IMR-90 (cell line): ENCODE measurements at regions of chr15 and their contacts with region 1.

Region 1: DNA sequence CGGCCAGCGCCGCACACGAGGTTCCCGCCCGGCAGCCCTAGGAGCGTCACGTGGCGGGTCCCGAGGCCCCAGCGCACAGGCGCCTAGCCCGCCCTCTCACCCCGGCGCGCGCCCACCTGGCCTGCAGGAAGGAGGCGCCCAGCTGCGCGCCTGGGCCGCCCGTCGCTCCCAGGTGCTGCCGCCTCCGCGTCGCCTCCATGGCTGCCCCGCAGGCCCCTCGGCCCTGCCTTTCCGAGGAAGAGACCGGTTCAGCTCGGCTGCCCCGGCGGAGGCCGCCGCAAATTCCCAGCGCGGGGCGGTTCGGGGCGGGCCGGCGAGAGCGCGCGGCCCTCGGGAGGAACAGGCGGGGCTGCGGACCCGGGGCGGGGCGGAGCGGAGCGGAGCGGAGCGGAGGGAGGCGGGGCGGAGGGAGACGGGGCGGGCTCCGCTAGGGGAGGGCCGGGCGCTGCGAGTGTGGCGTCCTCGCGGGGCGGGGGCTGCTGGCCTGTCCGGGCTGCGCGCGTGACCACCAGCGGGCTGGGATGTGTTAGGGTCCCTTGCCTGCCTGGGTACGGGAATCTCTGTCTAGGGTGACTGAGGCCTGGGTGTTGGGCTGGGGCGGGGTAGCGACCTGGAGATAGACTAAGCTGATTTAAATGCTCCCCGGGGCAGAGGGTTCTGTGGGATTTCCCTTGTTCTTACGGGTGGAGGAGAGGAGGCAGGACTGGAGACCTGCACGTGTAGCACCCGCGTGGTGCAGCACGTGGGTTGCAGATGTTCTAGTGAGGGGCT is at the start of gene CLN6:
- DNase-seq: peak; percentile 77
- ATAC-seq: peak; percentile 93
- H3K4me3 ChIP-seq: peak within 1 kb of the TSS; percentile 94
- H3K27ac ChIP-seq: peak within 1 kb of the TSS; percentile 77
- H3K4me1 ChIP-seq: peaks cover 8% of the 10 kb centered on the region
- H3K27me3 ChIP-seq: no peaks in the 10 kb centered on the region
- CTCF ChIP-seq: no peak
- POLR2A ChIP-seq: peak; percentile 45; the same call in 1 of the 2 replicates
- RAD21 ChIP-seq: no peak
- total RNA-seq, gene CLN6: 5.3 and 6.5 TPM in 2 replicates

Region 2: DNA sequence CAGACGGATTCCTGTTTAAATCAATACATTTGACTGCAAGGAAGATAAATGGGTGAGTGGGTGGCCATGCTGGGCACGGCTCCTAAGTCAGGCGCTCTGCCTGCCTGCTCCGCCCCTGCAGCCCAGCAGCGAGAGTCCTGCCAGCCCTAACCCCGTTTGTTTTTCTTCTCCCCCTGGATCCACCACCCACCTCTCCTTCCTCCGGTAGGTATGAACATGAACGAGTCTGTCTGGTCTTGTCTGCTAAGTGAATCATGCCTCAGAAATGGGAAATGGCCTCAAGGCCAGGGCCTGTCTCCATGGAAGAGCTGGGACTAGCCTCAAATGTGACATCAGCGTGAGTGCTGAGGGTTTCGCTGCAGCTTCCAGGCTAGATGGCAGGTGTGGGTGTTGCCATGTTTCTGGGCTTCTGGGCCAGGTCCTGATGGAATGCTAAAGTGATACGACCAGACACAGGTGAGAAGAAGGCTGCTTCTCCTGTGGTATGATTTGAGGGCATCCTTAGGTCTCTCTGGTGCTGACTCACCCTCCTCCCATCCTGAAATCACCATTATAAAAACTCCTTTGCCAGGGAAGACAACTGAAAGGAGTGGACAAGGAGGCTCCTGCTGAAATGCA is 42.4 kb after region 1 on chr15:
- CTCF ChIA-PET with region 1: no interaction called
- POLR2A ChIA-PET with region 1: interaction called, 13 read pairs
- dilution Hi-C with region 1: no loop called
- in situ Hi-C with region 1: no loop called
- intact Hi-C with region 1: no loop called
- DNase-seq: peak; percentile 92
- ATAC-seq: peak; percentile 75
- H3K4me3 ChIP-seq: no peak overlapping the region
- H3K27ac ChIP-seq: peak overlapping the region; percentile 63
- H3K4me1 ChIP-seq: peaks cover 39% of the 10 kb centered on the region
- H3K27me3 ChIP-seq: no peaks in the 10 kb centered on the region
- CTCF ChIP-seq: no peak
- POLR2A ChIP-seq: no peak
- RAD21 ChIP-seq: no peak

Region 3: GRCh38 chr15:68402432-68403160 is 173.0 kb after region 1 on chr15:
- CTCF ChIA-PET with region 1: no interaction called
- POLR2A ChIA-PET with region 1: no interaction called
- dilution Hi-C with region 1: no loop called
- in situ Hi-C with region 1: no loop called
- intact Hi-C with region 1: no loop called
- DNase-seq: no peak
- ATAC-seq: no peak
- H3K4me3 ChIP-seq: no peak overlapping the region
- H3K27ac ChIP-seq: no peak overlapping the region
- H3K4me1 ChIP-seq: no peaks in the 10 kb centered on the region
- H3K27me3 ChIP-seq: 0 out of 2 replicates have a peak, but pooled peaks cover 2% of the 10 kb centered on the region
- CTCF ChIP-seq: no peak
- POLR2A ChIP-seq: no peak
- RAD21 ChIP-seq: no peak